Activated B cell treated with CpG ODN at 0.5 μM for 24 hours (primary cell): ENCODE measurements at regions of chr1 and their contacts with region 1.

Region 1: DNA sequence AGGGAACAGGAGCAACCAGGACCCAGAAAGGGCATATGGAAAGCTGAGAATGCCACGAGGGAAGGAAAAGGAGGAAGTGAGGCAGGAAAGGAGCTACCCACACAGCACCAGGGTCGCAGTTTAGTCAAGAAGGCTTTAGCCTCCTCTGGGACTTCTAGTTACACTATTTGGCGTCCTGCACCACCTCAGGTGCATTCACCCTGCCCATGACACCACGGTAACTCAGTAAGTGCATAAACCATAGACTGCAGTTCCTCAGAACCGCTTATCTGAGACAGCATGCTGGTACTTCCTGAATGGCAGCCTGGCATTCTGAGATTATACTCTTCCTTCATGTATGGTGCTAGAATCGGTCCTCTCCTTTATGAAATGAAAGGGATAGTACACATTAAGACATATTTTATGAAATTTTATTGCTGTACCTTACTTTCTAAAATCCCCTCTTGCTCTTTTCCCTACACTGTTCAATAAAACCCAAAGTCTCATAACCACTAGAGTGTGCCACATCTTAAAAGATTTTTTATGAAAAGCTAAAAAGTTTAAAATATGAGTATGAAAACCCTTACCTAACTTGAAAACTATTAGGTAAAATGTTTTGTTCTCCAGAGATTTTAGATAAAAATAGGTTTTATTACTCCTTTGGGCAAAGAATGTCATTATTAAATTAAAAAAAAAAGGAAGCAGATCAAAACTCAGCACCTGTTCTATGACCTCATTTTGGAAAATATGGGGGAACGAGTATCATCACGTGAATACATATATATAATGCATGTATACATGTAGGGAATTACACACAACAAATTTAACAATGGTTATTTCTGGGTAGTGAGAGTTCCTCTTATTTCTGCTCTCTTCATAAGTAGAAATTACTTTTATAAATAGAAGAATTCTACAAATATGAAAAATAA is 67.3 kb downstream of the VAV3 start:
- DNase-seq: peak; percentile 40
- ATAC-seq: peak; percentile 82
- H3K4me3 Mint-ChIP-seq: peak overlapping the region; percentile 33
- H3K27ac Mint-ChIP-seq: peak overlapping the region; percentile 92
- H3K4me1 Mint-ChIP-seq: peaks cover 88% of the 10 kb centered on the region
- H3K27me3 Mint-ChIP-seq: no peaks in the 10 kb centered on the region
- CTCF ChIP-seq: no peak

Region 2: GRCh38 chr1:107782217-107782845 is 115.4 kb before region 1 on chr1:
- CTCF ChIA-PET with region 1: interaction called, 7 read pairs
- POLR2A ChIA-PET with region 1: no interaction called
- intact Hi-C with region 1: loop called (anchors 1 kb)
- DNase-seq: no peak
- ATAC-seq: peak; percentile 19
- H3K4me3 Mint-ChIP-seq: no peak overlapping the region
- H3K27ac Mint-ChIP-seq: no peak overlapping the region
- H3K4me1 Mint-ChIP-seq: peaks cover 54% of the 10 kb centered on the region
- H3K27me3 Mint-ChIP-seq: no peaks in the 10 kb centered on the region
- CTCF ChIP-seq: peak; percentile 83

Region 3: DNA sequence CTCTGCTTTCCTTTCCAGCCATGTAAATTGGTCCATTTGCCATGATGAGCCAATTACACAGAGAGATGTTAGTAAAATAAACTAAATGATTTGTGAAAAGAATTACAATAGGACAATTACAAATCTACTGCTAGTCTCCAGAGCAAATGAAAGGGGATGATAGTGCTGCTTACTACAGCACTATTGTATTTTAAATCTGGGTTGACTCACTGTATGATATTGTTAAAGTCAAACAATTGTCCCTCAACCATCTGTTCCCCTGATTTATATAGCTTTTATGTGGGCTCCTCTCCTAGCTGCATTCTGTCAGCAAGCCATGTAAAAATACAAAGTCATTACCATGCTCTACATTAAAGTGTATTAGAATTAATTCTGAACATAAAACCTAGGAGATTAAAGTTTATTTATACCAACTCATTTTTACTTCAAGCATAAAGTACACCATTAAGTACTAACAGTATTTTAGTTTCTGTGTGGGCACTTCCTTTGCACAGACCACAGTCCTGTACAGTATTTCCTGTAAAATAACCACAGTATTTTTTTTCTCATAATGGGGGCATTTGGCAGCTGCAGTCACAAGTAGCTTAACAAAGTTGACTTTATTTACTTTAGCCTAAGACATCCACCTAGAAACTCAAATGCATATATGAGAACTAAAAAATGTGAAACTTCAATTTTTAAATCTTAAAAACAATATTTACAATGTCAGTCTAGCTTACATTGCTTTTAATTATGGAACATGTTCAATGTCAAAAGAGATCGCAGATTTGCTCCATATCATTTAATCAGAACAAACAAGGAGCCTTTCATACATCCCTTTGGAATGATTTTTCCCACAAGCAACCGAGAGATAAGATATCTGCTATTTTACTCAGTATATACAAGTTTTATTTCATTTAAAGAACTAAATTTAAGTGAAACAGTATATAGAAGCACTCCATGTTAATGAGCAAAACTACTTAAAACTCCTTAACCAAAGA is 68.3 kb before region 1 on chr1:
- CTCF ChIA-PET with region 1: no interaction called
- POLR2A ChIA-PET with region 1: interaction called, 4 read pairs
- intact Hi-C with region 1: loop called (anchors 1 kb)
- DNase-seq: no peak
- ATAC-seq: peak; percentile 80
- H3K4me3 Mint-ChIP-seq: peak overlapping the region; percentile 65
- H3K27ac Mint-ChIP-seq: peak overlapping the region; percentile 89
- H3K4me1 Mint-ChIP-seq: peaks cover 89% of the 10 kb centered on the region
- H3K27me3 Mint-ChIP-seq: no peaks in the 10 kb centered on the region
- CTCF ChIP-seq: no peak

Region 4: DNA sequence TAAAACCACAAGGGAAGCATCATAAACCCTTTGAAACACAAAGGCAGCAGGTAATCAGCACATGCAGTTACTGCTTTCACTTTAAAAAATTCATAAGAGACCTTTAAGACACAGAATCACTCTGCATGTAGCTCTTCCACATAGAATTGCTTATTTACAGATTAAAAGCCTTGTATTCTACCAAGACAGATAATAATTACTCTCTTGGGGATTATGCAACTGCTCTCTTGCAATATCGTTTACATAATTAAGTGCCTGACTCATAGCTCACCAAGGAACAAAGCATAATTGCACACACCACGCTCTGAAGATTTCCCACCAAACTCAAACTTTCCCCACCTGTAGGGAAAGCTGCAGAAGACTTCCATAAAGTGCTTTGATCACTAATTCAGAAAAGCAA is 20.6 kb before region 1 on chr1:
- CTCF ChIA-PET with region 1: interaction called, 3 read pairs
- POLR2A ChIA-PET with region 1: interaction called, 8 read pairs
- intact Hi-C with region 1: loop called (anchors 1 kb)
- DNase-seq: no peak
- ATAC-seq: peak; percentile 70
- H3K4me3 Mint-ChIP-seq: peak overlapping the region; percentile 62
- H3K27ac Mint-ChIP-seq: peak overlapping the region; percentile 75
- H3K4me1 Mint-ChIP-seq: peaks cover 87% of the 10 kb centered on the region
- H3K27me3 Mint-ChIP-seq: no peaks in the 10 kb centered on the region
- CTCF ChIP-seq: no peak

Region 5: GRCh38 chr1:107919953-107920352 is 22.3 kb after region 1 on chr1:
- CTCF ChIA-PET with region 1: no interaction called
- POLR2A ChIA-PET with region 1: interaction called, 3 read pairs
- intact Hi-C with region 1: loop called (anchors 2 kb)
- DNase-seq: no peak
- ATAC-seq: peak; percentile 21
- H3K4me3 Mint-ChIP-seq: peak overlapping the region; percentile 42
- H3K27ac Mint-ChIP-seq: peak overlapping the region; percentile 56
- H3K4me1 Mint-ChIP-seq: peaks cover 72% of the 10 kb centered on the region
- H3K27me3 Mint-ChIP-seq: no peaks in the 10 kb centered on the region
- CTCF ChIP-seq: no peak

Region 6: DNA sequence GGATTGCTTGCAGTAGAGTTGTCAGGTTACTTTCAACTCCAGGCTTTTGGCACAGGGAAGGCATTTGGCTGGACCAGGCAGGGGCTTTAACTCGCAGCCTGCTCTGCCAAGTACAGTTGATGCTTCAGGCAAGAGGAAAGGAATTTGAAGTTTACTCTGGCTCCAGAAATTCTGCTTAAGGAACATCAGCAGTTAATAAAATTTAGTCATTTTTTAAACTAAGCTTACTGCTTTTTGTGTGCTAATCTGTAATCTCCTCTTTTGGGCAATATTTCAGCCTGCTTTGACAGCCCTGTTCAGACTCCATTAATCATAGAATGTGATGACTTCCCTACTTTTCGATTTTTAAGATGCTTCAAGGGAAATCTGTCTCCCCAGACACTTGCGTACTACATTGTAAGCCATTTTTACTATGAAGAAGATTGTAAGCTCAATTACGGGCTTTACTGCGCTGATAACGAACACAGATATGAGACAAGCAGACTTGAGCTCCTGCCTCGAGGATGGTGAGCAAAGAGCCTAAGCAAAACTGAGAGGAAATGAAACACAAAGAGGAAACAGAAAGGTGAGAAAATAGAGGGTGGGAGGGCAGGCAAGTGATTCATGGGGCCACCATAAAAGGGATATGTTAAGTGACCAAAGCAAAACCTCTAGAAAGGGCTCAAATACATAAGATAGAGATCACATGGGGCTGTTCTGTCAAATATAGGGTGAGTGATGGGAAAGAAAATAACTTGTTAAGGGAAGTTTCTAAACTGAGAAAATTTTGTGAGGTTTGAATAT is 143.9 kb after region 1 on chr1:
- CTCF ChIA-PET with region 1: no interaction called
- POLR2A ChIA-PET with region 1: no interaction called
- intact Hi-C with region 1: loop called (anchors 2 kb)
- DNase-seq: no peak
- ATAC-seq: peak; percentile 54
- H3K4me3 Mint-ChIP-seq: peak overlapping the region; percentile 55
- H3K27ac Mint-ChIP-seq: peak overlapping the region; percentile 82
- H3K4me1 Mint-ChIP-seq: peaks cover 39% of the 10 kb centered on the region
- H3K27me3 Mint-ChIP-seq: no peaks in the 10 kb centered on the region
- CTCF ChIP-seq: no peak

Region 7: DNA sequence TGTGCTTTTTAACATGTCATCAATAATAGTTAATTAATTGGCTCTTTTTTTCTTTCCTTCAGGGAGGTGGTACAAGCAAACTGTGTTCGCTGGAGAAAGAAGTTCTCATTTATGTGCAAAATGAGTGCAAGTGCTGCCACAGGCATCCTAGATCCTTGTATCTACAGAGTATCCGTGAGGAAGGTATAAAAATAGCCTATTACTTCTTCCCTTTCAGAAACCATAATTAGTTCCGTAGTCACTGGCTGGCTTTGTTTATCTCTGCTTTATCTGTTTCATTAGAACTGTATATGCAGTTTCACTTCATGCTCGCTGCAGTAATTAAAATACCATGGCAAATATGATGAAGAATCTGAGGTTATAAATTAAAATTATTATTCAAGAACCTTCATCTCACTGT is 702.8 kb after region 1 on chr1:
- CTCF ChIA-PET with region 1: no interaction called
- POLR2A ChIA-PET with region 1: no interaction called
- intact Hi-C with region 1: no loop called
- DNase-seq: no peak
- ATAC-seq: no peak
- H3K4me3 Mint-ChIP-seq: no peak overlapping the region
- H3K27ac Mint-ChIP-seq: no peak overlapping the region
- H3K4me1 Mint-ChIP-seq: no peaks in the 10 kb centered on the region
- H3K27me3 Mint-ChIP-seq: no peaks in the 10 kb centered on the region
- CTCF ChIP-seq: no peak